Heart left ventricle (tissue), 16 donors: ENCODE measurements at regions of chr6 and their contacts with region 1.

Region 1: DNA sequence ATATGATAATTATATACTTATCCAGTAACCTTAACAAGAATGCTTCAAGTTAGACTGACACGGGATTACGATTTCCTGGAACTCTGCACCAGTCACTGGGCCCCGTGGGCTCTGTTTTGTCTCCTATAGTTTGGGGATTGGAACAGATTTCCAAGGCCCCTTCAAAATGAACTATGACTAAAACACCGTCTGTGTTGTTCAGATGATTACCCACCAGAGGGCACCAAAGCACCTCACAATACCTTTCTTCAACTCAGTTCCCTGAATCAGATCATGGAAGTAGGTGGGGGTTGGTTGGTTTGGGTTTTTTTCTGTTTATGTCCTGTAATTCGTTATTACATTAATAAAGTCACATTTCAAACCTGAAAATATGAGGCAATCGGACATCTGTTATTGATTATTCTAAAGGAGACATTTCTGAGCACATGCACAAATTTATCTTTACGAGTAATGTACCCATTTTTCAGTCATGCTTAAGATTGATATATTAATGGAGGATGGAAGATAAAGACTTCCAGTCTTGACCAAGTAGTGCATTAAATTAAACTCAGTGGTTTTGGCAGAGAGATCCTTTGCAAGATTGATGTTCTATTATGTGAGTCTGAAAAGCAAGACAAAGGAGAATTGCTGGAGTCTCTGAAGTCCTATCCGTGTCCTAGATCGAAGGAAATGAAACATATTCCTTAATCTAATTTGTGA is 112.0 kb upstream of the COL21A1 start:
- DNase-seq: peak in 4 of 5 donors; percentile 36 to 60 (median 56)
- ATAC-seq: peak; percentile 34 to 80 (median 70)
- H3K4me3 ChIP-seq: no peak overlapping the region
- H3K27ac ChIP-seq: no peak overlapping the region
- H3K4me1 ChIP-seq: peaks cover 0 to 11% (median 1%) of the 10 kb centered on the region in 12 donors
- H3K27me3 ChIP-seq: no peaks in the 10 kb centered on the region
- CTCF ChIP-seq: peak; percentile 71 to 94 (median 82)
- POLR2A ChIP-seq: no peak

Region 2: DNA sequence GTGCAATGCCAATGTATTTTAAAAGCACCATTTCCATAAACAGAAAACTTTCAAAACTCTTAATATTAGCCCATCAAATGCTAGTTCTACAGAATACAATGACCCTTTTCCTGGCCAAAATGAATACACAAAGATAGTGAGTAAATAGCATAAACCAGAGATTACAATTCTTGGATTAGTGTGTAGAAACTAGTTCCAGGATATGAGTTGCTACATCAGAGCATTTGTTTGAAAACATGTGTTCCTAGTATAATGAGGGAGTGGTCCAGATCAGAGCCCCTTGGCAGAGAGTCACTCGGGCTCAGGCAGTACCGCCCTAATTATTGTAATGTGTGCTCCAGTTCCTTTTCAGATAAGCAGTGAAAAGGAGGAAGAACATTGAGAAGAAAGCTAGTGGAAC is 48.3 kb before region 1 on chr6:
- intact Hi-C with region 1: no loop called
- DNase-seq: no peak
- ATAC-seq: peak; percentile 18 to 68 (median 50)
- H3K4me3 ChIP-seq: no peak overlapping the region
- H3K27ac ChIP-seq: no peak overlapping the region
- H3K4me1 ChIP-seq: no peaks in the 10 kb centered on the region
- H3K27me3 ChIP-seq: no peaks in the 10 kb centered on the region
- CTCF ChIP-seq: no peak
- POLR2A ChIP-seq: no peak

Region 3: GRCh38 chr6:56459025-56459810 is 99.9 kb after region 1 on chr6:
- intact Hi-C with region 1: loop called in 1 of 10 experiments (anchors 5 kb)
- DNase-seq: no peak
- ATAC-seq: peak in 1 of 4 donors; percentile 8
- H3K4me3 ChIP-seq: no peak overlapping the region
- H3K27ac ChIP-seq: no peak overlapping the region
- H3K4me1 ChIP-seq: no peaks in the 10 kb centered on the region
- H3K27me3 ChIP-seq: no peaks in the 10 kb centered on the region
- CTCF ChIP-seq: no peak
- POLR2A ChIP-seq: no peak

Region 4: DNA sequence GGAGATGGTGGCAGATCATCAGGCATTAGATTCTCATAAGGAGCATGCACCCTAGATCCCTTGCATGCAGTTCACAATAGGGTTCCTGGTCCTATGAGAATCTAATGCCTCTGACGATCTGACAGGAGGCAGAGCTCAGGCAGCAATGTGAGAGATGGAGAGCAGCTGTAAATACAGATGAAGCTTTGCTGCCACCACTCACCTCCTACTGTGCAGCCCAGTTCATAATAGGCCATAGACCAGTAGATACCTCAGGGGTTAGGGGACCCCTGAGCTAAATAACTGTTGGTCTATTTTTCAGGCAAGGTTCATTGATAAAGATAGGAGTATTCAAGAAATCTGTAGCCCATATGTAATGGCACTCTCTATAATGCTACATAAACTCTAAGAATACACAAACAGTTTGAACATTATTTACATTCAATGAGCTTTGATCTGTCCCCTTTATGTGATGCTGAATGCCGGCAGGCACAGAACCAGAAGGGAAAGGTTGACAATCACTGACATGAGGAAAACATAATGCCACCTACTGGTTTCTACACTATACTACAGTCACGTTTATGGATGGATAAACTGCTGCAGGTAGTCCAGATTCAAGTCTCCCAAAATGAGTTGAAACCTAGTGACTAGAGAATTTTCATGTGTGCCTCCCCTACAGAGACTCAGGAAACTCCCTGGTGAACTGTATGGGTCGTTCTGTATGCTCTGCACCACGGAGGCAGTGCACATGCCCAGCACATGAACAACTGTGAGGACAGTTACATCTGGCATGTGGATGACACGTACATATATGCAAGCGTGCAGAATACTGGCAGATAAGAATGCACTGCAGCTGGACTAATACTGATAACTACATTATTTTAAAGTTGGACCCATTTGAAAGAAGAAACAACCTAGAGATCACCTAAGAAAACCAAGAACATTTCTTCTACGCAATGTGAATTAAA is 211.3 kb after region 1 on chr6:
- intact Hi-C with region 1: loop called in 5 of 10 experiments (anchors 1 to 5 kb)
- DNase-seq: no peak
- ATAC-seq: peak in 3 of 4 donors; percentile 66 to 80 (median 75)
- H3K4me3 ChIP-seq: no peak overlapping the region
- H3K27ac ChIP-seq: no peak overlapping the region
- H3K4me1 ChIP-seq: peaks cover 0 to 28% (median 2%) of the 10 kb centered on the region in 12 donors
- H3K27me3 ChIP-seq: no peaks in the 10 kb centered on the region
- CTCF ChIP-seq: peak; percentile 43 to 75 (median 62)
- POLR2A ChIP-seq: no peak

Region 5: GRCh38 chr6:56595490-56596122 is 236.3 kb after region 1 on chr6:
- intact Hi-C with region 1: loop called (anchors 1 to 5 kb)
- DNase-seq: peak in 1 of 5 donors; percentile 44
- ATAC-seq: peak; percentile 35 to 75 (median 66)
- H3K4me3 ChIP-seq: no peak overlapping the region
- H3K27ac ChIP-seq: peak overlapping the region in 1 of 12 donors; percentile 50
- H3K4me1 ChIP-seq: peaks cover 0 to 28% (median 0%) of the 10 kb centered on the region in 12 donors
- H3K27me3 ChIP-seq: no peaks in the 10 kb centered on the region
- CTCF ChIP-seq: peak; percentile 49 to 71 (median 59)
- POLR2A ChIP-seq: no peak